Left ventricle myocardium superior (tissue), 1 donor: ENCODE measurements at regions of chr10 and their contacts with region 1.

Region 1: DNA sequence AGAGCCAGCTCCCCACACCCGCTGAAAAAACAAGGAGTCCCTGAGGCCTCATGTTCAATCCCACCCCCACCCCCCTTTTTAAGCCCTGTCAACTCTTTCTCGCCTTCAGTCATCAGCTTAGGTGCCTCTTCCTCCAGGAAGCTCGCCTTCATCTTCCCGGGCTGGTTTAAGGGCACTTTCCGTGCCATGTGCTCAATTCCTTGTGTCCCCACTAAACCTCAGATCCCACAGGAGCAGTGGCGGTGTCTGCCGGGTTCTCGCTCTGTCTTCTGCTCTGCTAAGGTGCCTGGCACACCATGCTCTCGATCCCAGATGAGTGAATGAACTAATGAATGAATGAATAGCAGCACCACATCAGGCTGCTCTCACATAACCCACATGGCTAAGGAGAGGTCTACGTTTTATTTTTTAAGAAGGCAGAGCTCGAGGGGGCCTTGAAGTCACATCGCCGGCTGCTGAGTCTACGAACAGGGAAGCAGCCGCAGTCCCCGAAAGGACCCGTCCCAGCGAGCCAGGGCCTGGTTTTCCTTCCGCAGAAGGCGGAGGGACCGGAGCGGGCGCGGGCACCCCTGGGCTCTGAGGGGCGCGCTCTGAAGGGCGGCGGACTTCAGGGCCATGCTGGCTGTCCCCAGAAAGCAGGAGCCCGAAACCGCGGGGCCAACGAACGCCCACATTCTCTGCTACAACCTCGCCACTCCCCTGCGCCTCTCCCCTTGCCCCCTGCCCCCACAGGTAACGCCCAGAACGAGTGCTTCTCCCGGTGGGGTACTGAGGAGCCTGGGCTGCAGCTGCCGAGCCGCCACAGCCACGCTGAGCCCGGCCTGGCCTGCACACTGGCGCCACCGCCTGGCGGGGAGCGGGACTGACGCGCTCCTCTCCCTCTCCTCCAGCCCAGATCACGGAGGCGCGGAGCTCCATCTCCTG is 73.4 kb upstream of the KCNMA1 start:
- DNase-seq: peak; percentile 87
- ATAC-seq: peak; percentile 98

Region 2: GRCh38 chr10:77165445-77166208 is 545.4 kb before region 1 on chr10:
- intact Hi-C with region 1: loop called (anchors 10 kb)
- DNase-seq: no peak
- ATAC-seq: peak; percentile 68

Region 3: DNA sequence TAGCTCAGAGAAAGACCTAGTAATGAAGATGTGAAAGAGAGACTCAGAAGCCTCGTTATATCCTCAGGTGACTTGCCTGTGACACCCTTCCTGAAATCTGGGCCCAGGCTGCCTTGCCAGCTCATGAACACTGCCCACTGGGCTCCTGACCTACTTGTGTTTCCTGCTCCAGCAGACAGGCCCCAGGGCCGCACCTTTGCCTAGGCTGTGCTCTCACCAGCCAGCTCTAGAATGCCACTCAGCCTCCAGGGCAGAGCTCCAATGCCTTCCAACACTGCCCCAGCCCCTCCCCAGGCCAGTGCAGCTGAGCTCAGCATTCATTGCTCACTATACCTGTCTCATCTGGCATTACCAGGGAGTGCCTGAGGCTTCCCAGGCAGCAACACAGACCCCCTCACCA is 121.2 kb after region 1 on chr10:
- intact Hi-C with region 1: no loop called
- DNase-seq: no peak
- ATAC-seq: peak; percentile 66

Region 4: DNA sequence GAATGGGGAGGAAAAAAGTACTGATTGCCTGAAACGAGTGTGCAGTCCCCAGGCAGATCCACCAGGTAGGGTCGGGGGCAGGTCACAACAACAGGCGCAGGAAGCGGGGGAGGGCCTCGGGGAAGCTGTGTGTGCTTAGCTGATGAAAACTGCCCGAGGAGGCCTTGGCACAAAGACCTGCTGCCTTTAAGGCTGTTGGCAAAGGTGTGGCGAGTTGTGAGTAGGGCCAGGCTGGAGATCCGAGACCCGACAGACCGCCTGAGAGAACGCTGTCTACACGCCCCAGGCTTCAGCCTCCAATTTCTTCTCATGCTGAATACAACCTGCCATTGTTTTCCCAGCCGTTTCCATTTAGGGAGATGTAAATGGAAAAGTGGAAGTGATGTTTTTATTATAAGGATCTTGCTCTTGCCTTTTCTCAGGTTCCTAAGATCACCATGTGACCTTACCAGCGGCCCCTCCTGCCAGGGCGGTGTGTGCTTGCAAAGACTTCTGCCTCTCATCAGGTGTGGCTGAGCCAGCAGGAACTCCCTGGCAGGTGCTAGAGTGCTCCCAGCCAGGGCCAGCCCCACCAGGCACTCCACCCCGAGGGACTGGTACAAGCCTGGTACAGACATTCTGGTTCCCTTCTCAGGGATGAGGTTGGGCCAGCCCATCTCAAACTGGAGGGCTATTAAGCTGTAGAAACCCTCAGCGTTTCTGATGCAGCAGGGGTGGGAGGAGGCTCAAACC is 154.8 kb after region 1 on chr10:
- intact Hi-C with region 1: no loop called
- DNase-seq: no peak
- ATAC-seq: no peak